Activated naive CD4-positive, alpha-beta T cell treated with anti-CD3 and anti-CD28 coated beads for 36 hours (primary cell): ENCODE measurements at regions of chr2 and their contacts with region 1.

Region 1: GRCh38 chr2:48315896-48316194 is 214.1 kb upstream of the STON1 start:
- DNase-seq: peak; percentile 44
- H3K4me3 Mint-ChIP-seq: peak overlapping the region; percentile 86
- H3K27ac Mint-ChIP-seq: peak overlapping the region; percentile 97
- H3K4me1 Mint-ChIP-seq: peaks cover 42% of the 10 kb centered on the region
- H3K27me3 Mint-ChIP-seq: no peaks in the 10 kb centered on the region

Region 2: GRCh38 chr2:48221846-48222516 is 93.9 kb before region 1 on chr2:
- CTCF ChIA-PET with region 1: no interaction called
- intact Hi-C with region 1: no loop called
- DNase-seq: no peak
- H3K4me3 Mint-ChIP-seq: no peak overlapping the region
- H3K27ac Mint-ChIP-seq: no peak overlapping the region
- H3K4me1 Mint-ChIP-seq: peaks cover 9% of the 10 kb centered on the region
- H3K27me3 Mint-ChIP-seq: no peaks in the 10 kb centered on the region

Region 3: DNA sequence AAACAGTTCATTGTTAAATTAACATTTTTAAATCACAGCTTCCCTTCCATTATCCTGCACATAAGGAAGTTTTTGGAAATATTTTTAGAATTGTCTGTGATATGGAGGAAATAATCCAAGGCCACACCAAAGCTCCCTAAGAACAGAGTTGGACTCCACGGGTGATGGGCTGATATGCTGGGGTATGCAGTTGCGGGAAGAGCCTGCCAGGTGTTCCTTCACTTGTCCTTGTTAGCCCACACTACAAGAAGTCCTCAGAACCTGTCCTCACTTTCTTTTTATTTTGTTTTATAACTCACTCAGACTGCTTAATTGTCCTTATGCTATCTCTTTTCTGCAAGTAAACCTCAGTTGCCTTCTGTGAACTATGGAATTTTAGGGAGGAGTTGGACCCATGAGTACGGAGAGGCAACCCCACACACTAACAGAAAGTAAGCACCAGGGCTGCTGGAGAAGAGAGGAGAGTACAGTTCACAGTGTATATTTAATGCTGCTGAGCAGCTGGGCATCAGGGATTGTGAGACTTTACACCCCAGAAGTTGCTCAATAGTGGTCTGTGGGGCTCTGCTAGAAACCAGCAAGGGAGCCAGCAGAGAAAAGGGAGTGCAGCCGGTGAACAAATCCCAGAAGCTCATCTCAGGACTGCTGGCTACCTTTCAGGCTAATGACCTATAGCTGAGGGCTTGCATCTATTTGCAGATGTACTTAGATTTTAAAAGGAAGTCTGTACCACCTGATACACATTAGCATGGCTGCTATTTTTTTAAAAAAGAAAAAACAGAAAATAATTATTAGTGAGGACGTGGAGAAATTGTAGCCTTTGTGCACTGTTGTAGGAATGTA is 66.0 kb before region 1 on chr2:
- CTCF ChIA-PET with region 1: interaction called, 4 read pairs
- intact Hi-C with region 1: loop called (anchors 1 kb)
- DNase-seq: no peak
- H3K4me3 Mint-ChIP-seq: no peak overlapping the region
- H3K27ac Mint-ChIP-seq: no peak overlapping the region
- H3K4me1 Mint-ChIP-seq: peaks cover 17% of the 10 kb centered on the region
- H3K27me3 Mint-ChIP-seq: no peaks in the 10 kb centered on the region

Region 4: GRCh38 chr2:48332286-48332685 is 16.4 kb after region 1 on chr2:
- CTCF ChIA-PET with region 1: no interaction called
- intact Hi-C with region 1: loop called (anchors 2 kb)
- DNase-seq: no peak
- H3K4me3 Mint-ChIP-seq: no peak overlapping the region
- H3K27ac Mint-ChIP-seq: no peak overlapping the region
- H3K4me1 Mint-ChIP-seq: peaks cover 40% of the 10 kb centered on the region
- H3K27me3 Mint-ChIP-seq: no peaks in the 10 kb centered on the region